PC-3 (cell line): ENCODE measurements at regions of chr1 and their contacts with region 1.

Region 1: DNA sequence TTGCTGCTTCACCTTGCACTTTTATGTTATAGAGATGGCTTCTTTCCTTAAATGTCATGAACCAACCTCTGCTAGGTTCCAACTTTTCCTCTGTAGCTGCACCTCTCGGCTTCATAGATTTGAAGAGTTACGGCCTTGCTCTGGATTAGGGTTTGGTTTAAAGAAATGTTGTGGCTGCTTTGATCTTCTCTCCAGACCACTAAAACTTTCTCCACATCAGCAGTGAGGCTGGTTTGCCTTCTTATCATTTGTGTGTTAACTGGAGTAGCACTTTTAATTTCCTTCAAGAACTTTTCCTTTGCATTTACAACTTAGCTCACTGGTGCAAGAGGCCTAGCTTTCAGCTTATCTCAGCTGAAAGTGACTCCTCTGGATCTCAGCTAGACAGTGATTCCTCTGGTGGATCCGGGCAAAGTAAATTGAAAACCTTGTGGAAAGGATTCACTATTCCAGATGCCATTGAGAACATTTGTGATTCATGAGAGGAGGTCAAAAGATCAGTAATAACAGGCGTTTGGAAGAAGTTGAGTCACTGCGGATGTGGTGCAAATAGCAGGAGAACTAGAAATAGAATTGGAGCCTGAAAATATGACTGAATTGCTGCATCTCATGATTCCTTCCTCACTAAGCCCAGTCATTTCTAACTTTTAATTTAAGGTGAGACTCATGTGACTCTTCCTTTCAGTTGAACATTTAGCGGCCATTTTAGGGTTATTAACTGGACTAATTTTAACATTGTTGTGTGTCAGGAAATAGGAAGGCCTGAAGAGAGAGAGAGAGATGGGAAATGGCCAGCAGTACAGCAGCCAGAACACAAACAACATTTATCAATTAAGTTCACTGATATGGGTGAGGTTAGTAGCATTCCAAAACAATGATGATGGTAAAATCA is 16.2 kb upstream of the RGS1 start:
- DNase-seq: peak; percentile 89
- ATAC-seq: peak; percentile 87
- H3K4me3 ChIP-seq: peak overlapping the region; percentile 31; the same call in 1 of the 2 replicates
- H3K27ac ChIP-seq: peak overlapping the region; percentile 94
- H3K4me1 ChIP-seq: peaks cover 23% of the 10 kb centered on the region
- H3K27me3 ChIP-seq: no peaks in the 10 kb centered on the region
- CTCF ChIP-seq: no peak

Region 2: DNA sequence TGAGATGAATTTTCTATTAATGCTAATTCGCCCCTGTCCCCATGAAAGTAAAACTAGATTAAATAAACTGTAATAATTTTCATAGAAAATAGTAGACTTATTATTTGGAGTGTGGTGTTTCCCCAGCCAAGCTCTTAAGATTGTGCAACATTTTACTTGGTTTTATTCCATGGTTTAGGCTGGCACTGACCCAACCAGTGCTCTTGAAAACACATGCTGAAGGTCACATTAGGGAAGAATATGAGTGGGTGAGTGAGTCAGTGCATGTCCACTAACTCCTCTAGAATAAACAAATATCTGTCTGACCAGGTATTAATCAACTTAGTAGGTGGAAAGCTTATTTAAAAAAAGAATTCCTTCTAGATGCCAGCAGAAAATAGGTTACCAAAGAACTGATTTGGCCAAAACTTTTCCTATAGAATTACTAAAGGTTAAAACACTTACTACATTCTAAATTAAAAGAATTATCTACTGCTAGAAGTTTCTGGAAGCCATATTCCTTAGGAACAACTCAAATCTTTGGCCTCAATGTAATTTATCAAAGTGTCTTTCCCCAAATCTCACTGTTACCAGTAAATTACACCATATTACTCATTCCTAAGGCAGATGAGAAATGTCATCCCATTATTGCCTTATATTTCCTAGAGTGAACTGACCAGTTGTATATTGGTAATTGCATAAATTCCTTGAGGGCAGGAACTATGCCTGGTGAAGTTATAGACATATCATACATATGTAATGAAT is 73.5 kb before region 1 on chr1:
- CTCF ChIA-PET with region 1: no interaction called
- POLR2A ChIA-PET with region 1: no interaction called
- intact Hi-C with region 1: no loop called
- DNase-seq: peak; percentile 85
- ATAC-seq: peak; percentile 75
- H3K4me3 ChIP-seq: no peak overlapping the region
- H3K27ac ChIP-seq: peak overlapping the region; percentile 79
- H3K4me1 ChIP-seq: peaks cover 23% of the 10 kb centered on the region
- H3K27me3 ChIP-seq: no peaks in the 10 kb centered on the region
- CTCF ChIP-seq: no peak

Region 3: DNA sequence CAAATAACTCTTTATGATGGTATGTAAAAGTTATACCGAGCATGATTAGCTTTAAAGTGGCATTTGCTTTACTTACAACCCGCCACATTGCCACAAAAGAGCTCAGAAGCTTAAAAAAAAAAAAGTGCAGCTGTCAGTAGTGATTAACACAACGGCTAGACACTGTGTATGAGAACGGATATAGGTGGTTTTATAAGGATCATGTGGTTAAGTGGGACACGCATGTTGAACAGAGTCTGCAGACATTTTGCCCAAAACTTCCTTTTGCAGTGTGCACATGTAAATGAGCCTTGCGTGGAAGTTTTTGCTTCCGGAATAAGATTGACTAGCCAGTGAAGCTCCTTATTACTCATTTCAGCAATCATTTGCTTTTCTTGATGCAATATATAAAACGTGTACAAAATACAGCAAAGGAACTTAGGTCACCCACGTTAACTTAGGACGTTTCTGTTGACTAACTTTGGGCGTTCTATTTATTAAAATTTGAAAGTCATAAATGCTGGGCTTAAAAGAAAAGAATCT is 42.5 kb before region 1 on chr1:
- CTCF ChIA-PET with region 1: no interaction called
- POLR2A ChIA-PET with region 1: no interaction called
- intact Hi-C with region 1: loop called (anchors 5 kb)
- DNase-seq: peak; percentile 66
- ATAC-seq: peak; percentile 91
- H3K4me3 ChIP-seq: no peak overlapping the region; the same call in 1 of the 2 replicates
- H3K27ac ChIP-seq: peak overlapping the region; percentile 72
- H3K4me1 ChIP-seq: peaks cover 13% of the 10 kb centered on the region
- H3K27me3 ChIP-seq: no peaks in the 10 kb centered on the region
- CTCF ChIP-seq: no peak

Region 4: GRCh38 chr1:192539297-192540092 is 19.9 kb before region 1 on chr1:
- CTCF ChIA-PET with region 1: no interaction called
- POLR2A ChIA-PET with region 1: no interaction called
- intact Hi-C with region 1: loop called (anchors 1 kb)
- DNase-seq: peak; percentile 88
- ATAC-seq: peak; percentile 96
- H3K4me3 ChIP-seq: no peak overlapping the region
- H3K27ac ChIP-seq: peak overlapping the region; percentile 64
- H3K4me1 ChIP-seq: peaks cover 14% of the 10 kb centered on the region
- H3K27me3 ChIP-seq: no peaks in the 10 kb centered on the region
- CTCF ChIP-seq: no peak